ENCODE measurements at regions of chr1 and their contacts with region 1.

Region 1: GRCh38 chr1:84991097-84991920 is 5.6 kb downstream of the MCOLN2 start:
- DNase-seq: no peak
- H3K4me3 ChIP-seq: no peak overlapping the region
- H3K27ac ChIP-seq: no peak overlapping the region
- H3K4me1 ChIP-seq: peaks cover under 1% of the 10 kb centered on the region; the same call in 1 of the 2 replicates
- H3K27me3 ChIP-seq: peaks cover under 1% of the 10 kb centered on the region; the same call in 1 of the 2 replicates
- CTCF ChIP-seq: no peak

Region 2: GRCh38 chr1:85022700-85023099 is 31.4 kb after region 1 on chr1:
- CTCF ChIA-PET with region 1: interaction called, 19 read pairs
- POLR2A ChIA-PET with region 1: no interaction called
- intact Hi-C with region 1: no loop called
- DNase-seq: no peak
- H3K4me3 ChIP-seq: no peak overlapping the region
- H3K27ac ChIP-seq: no peak overlapping the region
- H3K4me1 ChIP-seq: no peaks in the 10 kb centered on the region
- H3K27me3 ChIP-seq: no peaks in the 10 kb centered on the region
- CTCF ChIP-seq: no peak

Region 3: GRCh38 chr1:85307987-85308832 is 316.9 kb after region 1 on chr1:
- CTCF ChIA-PET with region 1: no interaction called
- POLR2A ChIA-PET with region 1: no interaction called
- intact Hi-C with region 1: no loop called
- DNase-seq: peak; percentile 50 to 87
- H3K4me3 ChIP-seq: no peak overlapping the region
- H3K27ac ChIP-seq: no peak overlapping the region
- H3K4me1 ChIP-seq: peaks cover 3% of the 10 kb centered on the region
- H3K27me3 ChIP-seq: no peaks in the 10 kb centered on the region
- CTCF ChIP-seq: peak; percentile 81

Measured in PC-9 (cell line).